Right ventricle myocardium superior (tissue), 1 donor: ENCODE measurements at regions of chr2 and their contacts with region 1.

Region 1: DNA sequence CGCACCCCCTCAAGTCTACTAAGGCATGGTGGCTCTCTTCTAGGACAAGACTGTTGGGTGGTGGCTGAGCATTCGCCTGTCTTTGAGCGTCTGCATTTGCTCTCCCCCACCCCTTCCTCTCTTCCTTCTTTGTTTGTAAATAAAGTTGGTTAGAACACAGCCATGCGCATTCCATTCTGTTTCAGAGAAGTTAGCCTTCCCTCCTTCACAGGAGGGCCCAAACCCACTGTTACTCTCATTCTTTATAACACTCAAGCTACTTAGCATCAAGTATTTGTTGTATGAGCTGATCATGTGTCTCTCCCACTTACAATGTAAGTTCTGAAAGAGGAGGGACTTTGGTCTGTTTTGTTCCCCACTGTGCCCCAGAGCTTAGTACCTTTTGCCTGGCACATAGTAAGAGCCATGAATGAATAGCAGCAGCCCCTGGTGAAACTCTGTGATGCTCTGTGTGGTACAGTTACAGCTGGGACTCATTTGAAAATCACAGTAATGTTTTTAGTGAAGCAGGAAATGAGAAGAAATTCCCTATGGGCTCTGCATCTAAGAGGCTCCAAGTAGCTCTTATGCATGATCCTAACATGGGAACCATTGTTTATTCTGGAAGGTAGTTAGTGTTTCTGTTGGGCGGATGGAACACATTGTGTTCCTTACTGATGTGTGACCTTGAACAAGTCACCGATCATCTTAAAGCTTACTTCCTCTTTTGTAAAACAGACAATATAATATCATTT is 7.7 kb downstream of the MGAT5 start:
- DNase-seq: no peak
- ATAC-seq: peak; percentile 46

Region 2: GRCh38 chr2:134368009-134368817 is 106.6 kb after region 1 on chr2:
- intact Hi-C with region 1: loop called (anchors 10 kb)
- DNase-seq: no peak
- ATAC-seq: peak; percentile 44